SK-N-SH (cell line): ENCODE measurements at regions of chr1 and their contacts with region 1.

Region 1: DNA sequence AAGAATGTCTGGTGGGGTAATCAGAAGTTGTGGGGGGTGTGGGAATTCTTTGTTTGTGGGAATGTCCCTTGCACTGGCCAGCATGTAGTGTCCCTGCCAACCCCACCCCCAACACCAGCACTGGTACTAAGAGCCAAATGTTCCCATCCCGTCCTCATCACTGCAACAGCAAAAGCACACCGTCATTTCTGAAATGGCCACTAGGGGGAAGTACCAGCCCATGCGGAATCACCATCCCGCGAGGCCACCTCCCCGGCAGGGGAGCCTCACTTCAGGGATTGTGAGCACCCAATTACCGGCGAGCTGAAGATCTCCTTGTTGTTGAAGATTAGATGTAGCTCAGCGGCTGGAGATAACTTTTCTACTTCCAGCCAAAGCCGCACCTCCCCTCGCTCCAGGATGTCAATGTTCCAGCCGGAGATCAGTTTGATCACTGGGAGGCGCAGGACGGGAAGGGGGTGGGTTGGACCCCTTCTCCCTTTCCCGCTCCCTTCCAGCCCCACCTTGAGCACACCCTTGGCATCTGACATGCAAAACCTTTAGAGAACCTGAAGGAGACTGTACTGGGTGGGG is 41.0 kb downstream of the MYOM3 start:
- DNase-seq: peak; percentile 90
- H3K4me3 ChIP-seq: no peak overlapping the region; a peak in 1 of 4 replicates
- H3K27ac ChIP-seq: no peak overlapping the region
- H3K4me1 ChIP-seq: peaks cover 0 to 3% of the 10 kb centered on the region in 2 experiments; a peak in 1 of 4 replicates
- H3K27me3 ChIP-seq: no peaks in the 10 kb centered on the region
- CTCF ChIP-seq: peak; percentile 87
- EP300 ChIP-seq: no peak
- RAD21 ChIP-seq: peak; percentile 91

Region 2: GRCh38 chr1:23585447-23586015 is 485.4 kb before region 1 on chr1:
- CTCF ChIA-PET with region 1: no interaction called
- POLR2A ChIA-PET with region 1: no interaction called
- DNase-seq: no peak
- H3K4me3 ChIP-seq: no peak overlapping the region
- H3K27ac ChIP-seq: peak overlapping the region in 1 of 2 experiments; percentile 90; a peak in 2 of 4 replicates
- H3K4me1 ChIP-seq: peaks cover 8 to 15% of the 10 kb centered on the region in 2 experiments; a peak in 2 of 4 replicates
- H3K27me3 ChIP-seq: no peaks in the 10 kb centered on the region
- CTCF ChIP-seq: no peak
- EP300 ChIP-seq: peak in 1 of 2 experiments; percentile 81; a peak in 1 of 4 replicates
- RAD21 ChIP-seq: no peak

Region 3: GRCh38 chr1:23854568-23854967 is 216.3 kb before region 1 on chr1:
- CTCF ChIA-PET with region 1: no interaction called
- POLR2A ChIA-PET with region 1: no interaction called
- DNase-seq: peak; percentile 32
- H3K4me3 ChIP-seq: no peak overlapping the region
- H3K27ac ChIP-seq: no peak overlapping the region
- H3K4me1 ChIP-seq: no peaks in the 10 kb centered on the region
- H3K27me3 ChIP-seq: no peaks in the 10 kb centered on the region
- CTCF ChIP-seq: peak; percentile 25
- EP300 ChIP-seq: no peak
- RAD21 ChIP-seq: peak; percentile 49

Region 4: GRCh38 chr1:24085546-24085945 is 14.6 kb after region 1 on chr1:
- CTCF ChIA-PET with region 1: interaction called, 27 read pairs
- POLR2A ChIA-PET with region 1: no interaction called
- DNase-seq: no peak
- H3K4me3 ChIP-seq: no peak overlapping the region
- H3K27ac ChIP-seq: no peak overlapping the region
- H3K4me1 ChIP-seq: no peaks in the 10 kb centered on the region; a peak in 1 of 4 replicates
- H3K27me3 ChIP-seq: no peaks in the 10 kb centered on the region
- CTCF ChIP-seq: no peak
- EP300 ChIP-seq: no peak
- RAD21 ChIP-seq: no peak

Region 5: GRCh38 chr1:24111996-24112779 is 41.3 kb after region 1 on chr1 and contains the start of gene MYOM3:
- CTCF ChIA-PET with region 1: interaction called, 39 read pairs
- POLR2A ChIA-PET with region 1: no interaction called
- DNase-seq: peak; percentile 47
- H3K4me3 ChIP-seq: no peak within 1 kb of the TSS; a peak in 1 of 4 replicates
- H3K27ac ChIP-seq: peak within 1 kb of the TSS in 1 of 2 experiments; percentile 94; a peak in 2 of 4 replicates
- H3K4me1 ChIP-seq: peaks cover 10 to 40% of the 10 kb centered on the region in 2 experiments; a peak in 2 of 4 replicates
- H3K27me3 ChIP-seq: no peaks in the 10 kb centered on the region; the same call in 1 of the 2 replicates
- CTCF ChIP-seq: peak; percentile 40
- EP300 ChIP-seq: no peak
- RAD21 ChIP-seq: peak; percentile 67
- polyA plus RNA-seq, gene MYOM3: 0.02 and 0.05 TPM in 2 replicates

Region 6: GRCh38 chr1:24150234-24151174 is 79.6 kb after region 1 on chr1:
- CTCF ChIA-PET with region 1: interaction called, 16 read pairs
- POLR2A ChIA-PET with region 1: no interaction called
- DNase-seq: peak; percentile 86
- H3K4me3 ChIP-seq: peak overlapping the region; percentile 25 to 42; a peak in 3 of 4 replicates
- H3K27ac ChIP-seq: no peak overlapping the region
- H3K4me1 ChIP-seq: peaks cover 0 to 4% of the 10 kb centered on the region in 2 experiments; a peak in 1 of 4 replicates
- H3K27me3 ChIP-seq: no peaks in the 10 kb centered on the region; the same call in 1 of the 2 replicates
- CTCF ChIP-seq: peak; percentile 78
- EP300 ChIP-seq: no peak
- RAD21 ChIP-seq: peak; percentile 62